Activated CD4-positive, alpha-beta memory T cell treated with anti-CD3 and anti-CD28 coated beads for 36 hours (primary cell): ENCODE measurements at regions of chr2 and their contacts with region 1.

Region 1: DNA sequence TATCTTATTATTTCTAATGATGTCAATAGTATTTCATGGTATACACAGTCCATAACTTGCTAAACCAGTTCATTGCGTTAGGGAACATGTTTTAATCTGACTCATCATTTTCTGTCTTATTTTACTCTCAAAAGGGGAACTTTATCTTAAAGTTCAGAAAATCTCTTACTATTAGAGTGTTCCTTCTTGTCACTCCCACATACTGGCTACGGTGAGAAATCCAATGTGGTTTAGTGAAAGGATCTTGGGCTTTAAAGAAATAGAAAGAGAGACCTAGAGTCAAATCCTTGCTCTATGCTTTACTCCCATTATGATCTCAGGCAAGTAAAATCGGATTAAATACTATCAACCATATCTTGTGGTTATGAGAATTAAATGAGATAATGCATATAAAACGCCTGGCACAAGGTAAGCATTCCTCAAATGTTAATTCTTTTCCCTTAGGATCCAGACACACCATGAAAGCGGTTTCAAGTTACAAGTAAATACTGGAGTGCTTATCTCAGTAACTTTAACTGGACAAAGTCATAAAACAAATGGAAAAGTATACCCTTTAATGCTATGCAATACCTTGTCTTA is 576.0 kb downstream of the ARHGAP15 start:
- DNase-seq: no peak
- H3K4me3 Mint-ChIP-seq: no peak overlapping the region
- H3K27ac Mint-ChIP-seq: peak overlapping the region; percentile 68
- H3K4me1 Mint-ChIP-seq: peaks cover 41% of the 10 kb centered on the region
- H3K27me3 Mint-ChIP-seq: no peaks in the 10 kb centered on the region

Region 2: GRCh38 chr2:143397884-143398614 is 307.1 kb before region 1 on chr2:
- CTCF ChIA-PET with region 1: no interaction called
- POLR2A ChIA-PET with region 1: no interaction called
- intact Hi-C with region 1: loop called (anchors 1 kb)
- DNase-seq: no peak
- H3K4me3 Mint-ChIP-seq: peak overlapping the region; percentile 24
- H3K27ac Mint-ChIP-seq: peak overlapping the region; percentile 43
- H3K4me1 Mint-ChIP-seq: peaks cover 66% of the 10 kb centered on the region
- H3K27me3 Mint-ChIP-seq: no peaks in the 10 kb centered on the region

Region 3: GRCh38 chr2:143553261-143553660 is 151.9 kb before region 1 on chr2:
- CTCF ChIA-PET with region 1: no interaction called
- POLR2A ChIA-PET with region 1: no interaction called
- intact Hi-C with region 1: loop called (anchors 2 kb)
- DNase-seq: peak; percentile 60
- H3K4me3 Mint-ChIP-seq: no peak overlapping the region
- H3K27ac Mint-ChIP-seq: no peak overlapping the region
- H3K4me1 Mint-ChIP-seq: peaks cover 15% of the 10 kb centered on the region
- H3K27me3 Mint-ChIP-seq: no peaks in the 10 kb centered on the region

Region 4: DNA sequence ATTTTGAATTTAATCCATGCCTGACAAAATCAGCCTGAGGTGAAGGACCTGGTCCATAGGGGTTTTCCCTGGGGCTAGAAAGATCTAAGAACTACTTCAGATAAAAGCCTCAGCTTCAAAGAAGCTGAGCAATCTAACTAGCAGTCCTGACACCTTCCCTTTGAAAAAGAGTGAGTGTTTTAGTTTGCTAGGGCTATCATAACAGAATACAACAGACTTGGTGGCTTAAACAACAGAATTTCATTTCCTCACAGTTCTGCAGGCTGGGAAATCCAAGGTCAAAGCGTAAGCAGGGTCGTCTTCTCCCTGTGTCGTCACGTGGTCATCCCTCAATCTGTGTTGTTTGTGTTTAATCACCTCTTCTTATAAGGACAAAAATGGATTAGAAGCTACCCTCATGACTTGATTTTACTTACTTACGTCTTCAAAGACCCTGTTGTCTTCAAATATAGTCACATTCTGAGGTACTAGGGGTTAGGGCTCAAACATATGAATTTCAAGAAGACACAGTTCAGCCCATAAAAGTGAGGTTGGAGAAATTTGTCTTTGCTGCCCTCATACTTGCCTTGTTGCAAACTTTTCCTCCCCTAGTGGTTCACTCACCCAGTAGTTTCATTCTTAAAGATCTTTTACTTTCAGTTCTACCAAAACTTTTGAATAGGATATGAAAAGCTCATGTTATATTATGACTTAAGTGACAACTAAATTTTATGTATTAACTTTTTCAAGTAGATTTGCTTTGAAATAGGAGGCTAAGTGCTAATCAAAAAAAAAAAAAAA is 97.9 kb after region 1 on chr2:
- CTCF ChIA-PET with region 1: no interaction called
- POLR2A ChIA-PET with region 1: interaction called, 3 read pairs
- intact Hi-C with region 1: loop called (anchors 1 kb)
- DNase-seq: no peak
- H3K4me3 Mint-ChIP-seq: peak overlapping the region; percentile 27
- H3K27ac Mint-ChIP-seq: peak overlapping the region; percentile 73
- H3K4me1 Mint-ChIP-seq: peaks cover 17% of the 10 kb centered on the region
- H3K27me3 Mint-ChIP-seq: peaks cover 7% of the 10 kb centered on the region

Region 5: DNA sequence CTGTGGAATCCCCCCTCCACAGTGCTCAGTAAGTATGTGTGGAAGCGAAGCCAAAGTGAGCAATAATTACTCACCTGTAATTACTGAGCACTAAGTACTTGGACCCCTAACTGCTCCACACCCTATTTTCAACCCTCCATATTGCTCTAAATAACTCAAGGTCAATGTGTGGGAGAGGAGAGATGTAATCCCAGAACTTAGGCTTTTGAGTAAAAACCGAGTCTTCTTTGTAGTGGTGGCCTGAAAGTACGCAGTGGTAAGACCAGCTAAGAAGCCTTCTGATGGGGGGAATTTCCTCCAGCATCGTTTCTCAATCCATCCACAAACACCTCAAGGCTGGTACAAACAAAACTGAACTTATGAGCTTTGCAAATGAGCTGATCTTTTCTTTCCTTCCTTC is 263.2 kb after region 1 on chr2:
- CTCF ChIA-PET with region 1: no interaction called
- POLR2A ChIA-PET with region 1: no interaction called
- intact Hi-C with region 1: no loop called
- DNase-seq: no peak
- H3K4me3 Mint-ChIP-seq: no peak overlapping the region
- H3K27ac Mint-ChIP-seq: no peak overlapping the region
- H3K4me1 Mint-ChIP-seq: peaks cover 5% of the 10 kb centered on the region
- H3K27me3 Mint-ChIP-seq: no peaks in the 10 kb centered on the region